ENCODE measurements at regions of chr7 and their contacts with region 1.

Region 1: GRCh38 chr7:92245487-92246362 is at the starts of genes ANKIB1 and KRIT1:
- DNase-seq: peak; percentile 89
- H3K4me3 Mint-ChIP-seq: peak within 1 kb of the TSS; percentile 98
- H3K27ac Mint-ChIP-seq: peak within 1 kb of the TSS; percentile 97
- H3K4me1 Mint-ChIP-seq: peaks cover 45% of the 10 kb centered on the region
- H3K27me3 Mint-ChIP-seq: no peaks in the 10 kb centered on the region
- total RNA-seq, gene ANKIB1: 65.1 to 70.2 TPM
- total RNA-seq, gene KRIT1: 39.5 to 42.4 TPM

Region 2: DNA sequence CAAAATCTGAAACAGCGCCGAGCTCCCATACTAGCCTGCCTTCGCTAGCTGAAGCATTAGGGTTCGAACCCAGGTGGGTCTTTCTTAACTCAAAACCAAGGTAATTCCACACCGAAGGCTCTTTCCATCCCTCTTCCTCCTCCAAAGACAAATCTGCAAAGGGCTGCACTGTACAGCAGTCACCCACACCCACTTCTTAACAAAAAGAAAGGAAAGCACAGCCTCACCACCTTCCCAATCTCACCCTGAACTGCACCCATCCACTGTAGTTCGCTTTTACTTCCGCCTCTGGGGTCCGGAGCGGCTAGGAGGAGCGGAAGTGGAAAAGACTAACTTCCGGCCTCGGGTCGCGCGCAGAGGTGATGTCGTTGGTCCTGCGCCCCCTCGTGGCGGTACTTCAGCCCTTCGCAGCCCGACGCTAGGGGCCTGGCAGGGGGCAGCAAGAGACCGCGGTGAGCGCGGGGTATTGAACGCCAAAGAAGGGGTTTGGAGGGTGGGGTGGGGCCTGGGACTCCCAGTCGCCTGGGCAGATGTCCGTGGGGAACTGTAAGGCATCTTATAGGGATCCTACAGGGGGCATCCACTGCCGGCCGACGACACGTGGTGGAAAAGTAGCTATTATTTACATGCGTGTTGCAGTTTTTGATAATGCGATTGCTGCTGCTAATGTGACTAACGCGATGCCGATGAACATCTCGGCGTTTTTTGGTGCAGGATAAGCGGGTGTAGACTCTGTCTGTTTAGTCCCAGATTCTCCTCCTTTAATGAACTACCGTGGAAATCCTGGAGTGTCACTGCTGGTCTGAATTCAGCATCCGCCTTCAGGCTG is 365.1 kb before region 1 on chr7 and contains the start of gene MTERF1:
- CTCF ChIA-PET with region 1: interaction called, 5 read pairs
- POLR2A ChIA-PET with region 1: interaction called, 12 read pairs
- DNase-seq: peak; percentile 93
- H3K4me3 Mint-ChIP-seq: peak within 1 kb of the TSS; percentile 91
- H3K27ac Mint-ChIP-seq: peak within 1 kb of the TSS; percentile 88
- H3K4me1 Mint-ChIP-seq: peaks cover 30% of the 10 kb centered on the region
- H3K27me3 Mint-ChIP-seq: no peaks in the 10 kb centered on the region
- total RNA-seq, gene MTERF1: 15.4 to 15.6 TPM

Region 3: GRCh38 chr7:91940572-91941341 is 305.0 kb before region 1 on chr7 and contains the start of gene AKAP9:
- CTCF ChIA-PET with region 1: interaction called, 3 read pairs
- POLR2A ChIA-PET with region 1: interaction called, 15 read pairs
- DNase-seq: peak; percentile 90
- H3K4me3 Mint-ChIP-seq: peak within 1 kb of the TSS; percentile 89
- H3K27ac Mint-ChIP-seq: peak within 1 kb of the TSS; percentile 91
- H3K4me1 Mint-ChIP-seq: peaks cover 33% of the 10 kb centered on the region
- H3K27me3 Mint-ChIP-seq: no peaks in the 10 kb centered on the region
- total RNA-seq, gene AKAP9: 32.4 to 41.7 TPM

Region 4: GRCh38 chr7:92134271-92135051 is 111.3 kb before region 1 on chr7 and contains the start of gene CYP51A1:
- CTCF ChIA-PET with region 1: interaction called, 5 read pairs
- POLR2A ChIA-PET with region 1: interaction called, 36 read pairs
- DNase-seq: peak; percentile 93
- H3K4me3 Mint-ChIP-seq: peak within 1 kb of the TSS; percentile 90
- H3K27ac Mint-ChIP-seq: peak within 1 kb of the TSS; percentile 95
- H3K4me1 Mint-ChIP-seq: peaks cover 41% of the 10 kb centered on the region
- H3K27me3 Mint-ChIP-seq: peaks cover 1% of the 10 kb centered on the region
- total RNA-seq, gene CYP51A1: 94.3 to 97.9 TPM

Region 5: DNA sequence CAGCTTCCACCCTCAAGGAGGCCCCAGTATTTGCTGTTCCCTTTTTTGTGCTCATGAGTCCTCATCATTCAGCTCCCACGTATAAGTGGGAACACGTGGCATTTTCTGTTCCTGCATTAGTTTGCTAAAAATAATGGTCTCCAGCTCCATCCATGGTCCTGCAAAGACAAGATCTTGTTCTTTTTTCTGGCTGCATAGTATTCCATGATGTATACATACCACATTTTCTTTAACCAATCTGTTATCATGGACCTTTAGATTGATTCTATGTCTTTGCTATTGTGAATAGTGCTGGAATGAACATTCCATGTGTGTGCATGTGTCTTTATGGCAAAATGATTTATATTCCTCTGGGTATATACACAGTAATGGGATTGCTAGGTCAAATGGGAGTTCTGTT is 17.0 kb before region 1 on chr7:
- CTCF ChIA-PET with region 1: no interaction called
- POLR2A ChIA-PET with region 1: interaction called, 12 read pairs
- DNase-seq: no peak
- H3K4me3 Mint-ChIP-seq: no peak overlapping the region
- H3K27ac Mint-ChIP-seq: no peak overlapping the region
- H3K4me1 Mint-ChIP-seq: no peaks in the 10 kb centered on the region
- H3K27me3 Mint-ChIP-seq: no peaks in the 10 kb centered on the region

Region 6: DNA sequence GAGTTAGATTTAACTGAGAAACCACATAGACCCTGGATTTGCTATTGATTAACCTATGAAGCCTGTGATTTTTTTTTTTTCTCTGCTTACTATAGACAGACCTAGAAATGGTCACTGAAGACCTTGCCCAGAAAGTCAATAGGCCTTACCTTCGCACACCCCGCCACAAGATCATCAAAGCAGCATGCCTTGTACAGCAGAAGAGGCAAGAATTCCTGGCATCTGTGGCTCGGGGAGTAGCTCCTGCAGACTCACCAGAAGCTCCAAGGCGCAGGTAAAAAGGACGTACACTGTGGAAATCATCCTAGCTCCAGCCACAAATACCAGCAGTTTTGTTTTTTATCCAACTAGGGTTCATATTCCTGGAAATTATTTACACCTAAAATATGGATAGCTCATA is 145.3 kb after region 1 on chr7:
- CTCF ChIA-PET with region 1: no interaction called
- POLR2A ChIA-PET with region 1: no interaction called
- DNase-seq: no peak
- H3K4me3 Mint-ChIP-seq: no peak overlapping the region
- H3K27ac Mint-ChIP-seq: no peak overlapping the region
- H3K4me1 Mint-ChIP-seq: no peaks in the 10 kb centered on the region
- H3K27me3 Mint-ChIP-seq: no peaks in the 10 kb centered on the region

Measured in activated CD4-positive, alpha-beta memory T cell treated with anti-CD3 and anti-CD28 coated beads, Interleukin-2, amount 10 ng/mL, durations not matched to agents 7 days and 5 days (primary cell).